ENCODE measurements at regions of chr5 and their contacts with region 1.

Region 1: DNA sequence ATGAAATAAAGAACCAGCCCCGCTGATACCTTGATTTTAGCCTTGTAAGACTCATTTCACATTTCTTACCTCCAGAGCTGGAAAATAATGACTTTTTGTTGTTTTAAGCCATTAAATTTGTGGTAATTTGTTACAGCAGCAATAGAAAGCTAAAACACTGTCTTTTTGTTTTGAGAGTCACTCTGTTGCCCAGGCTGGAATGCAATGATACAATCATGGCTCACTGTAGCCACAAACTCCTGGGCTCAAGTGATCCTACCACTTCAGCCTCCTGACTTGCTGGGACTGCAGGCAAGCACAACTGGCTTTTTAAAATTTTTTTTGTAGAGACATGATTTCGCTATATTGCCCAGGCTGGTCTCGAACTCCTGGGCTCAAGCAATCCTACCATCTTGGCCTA is 34.7 kb upstream of the MYO10 start:
- DNase-seq: no peak
- ATAC-seq: no peak
- H3K4me3 Mint-ChIP-seq: no peak overlapping the region
- H3K27ac Mint-ChIP-seq: no peak overlapping the region
- H3K4me1 Mint-ChIP-seq: peaks cover 8% of the 10 kb centered on the region
- H3K27me3 Mint-ChIP-seq: no peaks in the 10 kb centered on the region
- CTCF ChIP-seq: no peak

Region 2: GRCh38 chr5:16754601-16755000 is 216.2 kb before region 1 on chr5:
- CTCF ChIA-PET with region 1: no interaction called
- POLR2A ChIA-PET with region 1: interaction called, 11 read pairs
- DNase-seq: no peak
- ATAC-seq: peak; percentile 53; the same call in 1 of the 2 replicates
- H3K4me3 Mint-ChIP-seq: no peak overlapping the region
- H3K27ac Mint-ChIP-seq: 0 out of 2 replicates have a peak overlapping the region, but pooled peaks have one; percentile 49
- H3K4me1 Mint-ChIP-seq: peaks cover 53% of the 10 kb centered on the region
- H3K27me3 Mint-ChIP-seq: no peaks in the 10 kb centered on the region
- CTCF ChIP-seq: no peak

Region 3: DNA sequence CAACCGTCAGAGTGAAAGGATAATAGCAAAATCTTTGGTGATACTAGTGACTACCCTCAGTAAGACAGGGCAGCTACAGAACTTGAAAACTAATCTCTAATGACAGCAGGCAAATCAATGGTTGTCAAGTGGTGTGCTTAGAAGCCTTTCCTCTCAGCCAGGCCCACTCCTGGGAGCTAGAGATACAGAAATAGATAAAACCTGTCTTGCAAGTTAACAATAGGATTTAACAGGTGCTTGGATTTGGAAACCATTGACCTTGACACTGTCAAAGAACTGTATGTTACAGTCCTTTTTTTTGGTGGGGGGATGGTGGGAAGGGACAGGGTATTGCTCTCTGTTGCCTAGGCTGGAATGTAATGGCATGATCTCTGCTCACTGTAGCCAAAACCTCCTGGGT is 365.2 kb after region 1 on chr5:
- CTCF ChIA-PET with region 1: no interaction called
- POLR2A ChIA-PET with region 1: no interaction called
- DNase-seq: no peak
- ATAC-seq: no peak
- H3K4me3 Mint-ChIP-seq: no peak overlapping the region
- H3K27ac Mint-ChIP-seq: no peak overlapping the region
- H3K4me1 Mint-ChIP-seq: no peaks in the 10 kb centered on the region
- H3K27me3 Mint-ChIP-seq: no peaks in the 10 kb centered on the region
- CTCF ChIP-seq: no peak

Measured in WTC11 (cell line).